ENCODE measurements at regions of chr10 and their contacts with region 1.

Region 1: GRCh38 chr10:99234041-99234790 is 1.4 kb downstream of the HPSE2 start:
- DNase-seq: peak; percentile 25
- H3K4me3 Mint-ChIP-seq: peak overlapping the region; percentile 39
- H3K27ac Mint-ChIP-seq: no peak overlapping the region
- H3K4me1 Mint-ChIP-seq: no peaks in the 10 kb centered on the region
- H3K27me3 Mint-ChIP-seq: peaks cover 74% of the 10 kb centered on the region

Region 2: DNA sequence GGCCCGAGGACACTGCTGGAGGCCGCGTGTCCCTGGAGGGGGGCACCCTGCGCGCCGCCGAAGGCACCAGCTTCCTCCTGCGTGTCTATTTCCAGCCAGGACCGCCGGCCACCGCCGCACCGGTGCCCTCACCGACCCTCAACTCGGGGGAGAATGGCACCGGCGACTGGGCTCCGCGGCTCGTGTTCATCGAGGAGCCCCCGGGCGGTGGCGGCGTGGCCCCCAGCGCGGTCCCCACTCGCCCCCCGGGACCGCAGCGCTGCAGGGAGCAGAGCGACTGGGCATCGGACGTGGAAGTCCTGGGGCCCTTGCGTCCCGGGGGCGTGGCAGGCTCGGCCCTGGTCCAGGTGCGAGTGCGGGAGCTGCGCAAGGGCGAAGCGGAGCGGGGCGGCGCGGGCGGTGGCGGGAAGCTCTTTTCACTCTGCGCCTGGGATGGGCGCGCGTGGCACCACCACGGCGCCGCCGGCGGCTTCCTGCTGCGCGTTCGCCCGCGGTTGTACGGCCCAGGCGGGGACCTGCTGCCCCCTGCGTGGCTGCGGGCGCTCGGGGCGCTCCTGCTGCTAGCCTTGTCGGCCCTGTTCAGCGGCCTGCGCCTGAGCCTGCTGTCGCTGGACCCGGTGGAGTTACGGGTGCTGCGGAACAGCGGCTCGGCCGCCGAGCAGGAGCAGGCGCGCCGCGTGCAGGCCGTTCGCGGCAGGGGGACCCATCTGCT is 95.5 kb after region 1 on chr10:
- intact Hi-C with region 1: loop called (anchors 5 kb)
- DNase-seq: no peak
- H3K4me3 Mint-ChIP-seq: no peak overlapping the region
- H3K27ac Mint-ChIP-seq: no peak overlapping the region
- H3K4me1 Mint-ChIP-seq: no peaks in the 10 kb centered on the region
- H3K27me3 Mint-ChIP-seq: peaks cover 34% of the 10 kb centered on the region

Region 3: GRCh38 chr10:99532687-99533495 is 298.7 kb after region 1 on chr10 and contains the start of gene NKX2-3:
- intact Hi-C with region 1: loop called (anchors 5 kb)
- DNase-seq: peak; percentile 6
- H3K4me3 Mint-ChIP-seq: peak within 1 kb of the TSS; percentile 22
- H3K27ac Mint-ChIP-seq: peak within 1 kb of the TSS; percentile 73
- H3K4me1 Mint-ChIP-seq: peaks cover 47% of the 10 kb centered on the region
- H3K27me3 Mint-ChIP-seq: peaks cover 87% of the 10 kb centered on the region
- total RNA-seq, gene NKX2-3: not detected in 2 replicates

Region 4: DNA sequence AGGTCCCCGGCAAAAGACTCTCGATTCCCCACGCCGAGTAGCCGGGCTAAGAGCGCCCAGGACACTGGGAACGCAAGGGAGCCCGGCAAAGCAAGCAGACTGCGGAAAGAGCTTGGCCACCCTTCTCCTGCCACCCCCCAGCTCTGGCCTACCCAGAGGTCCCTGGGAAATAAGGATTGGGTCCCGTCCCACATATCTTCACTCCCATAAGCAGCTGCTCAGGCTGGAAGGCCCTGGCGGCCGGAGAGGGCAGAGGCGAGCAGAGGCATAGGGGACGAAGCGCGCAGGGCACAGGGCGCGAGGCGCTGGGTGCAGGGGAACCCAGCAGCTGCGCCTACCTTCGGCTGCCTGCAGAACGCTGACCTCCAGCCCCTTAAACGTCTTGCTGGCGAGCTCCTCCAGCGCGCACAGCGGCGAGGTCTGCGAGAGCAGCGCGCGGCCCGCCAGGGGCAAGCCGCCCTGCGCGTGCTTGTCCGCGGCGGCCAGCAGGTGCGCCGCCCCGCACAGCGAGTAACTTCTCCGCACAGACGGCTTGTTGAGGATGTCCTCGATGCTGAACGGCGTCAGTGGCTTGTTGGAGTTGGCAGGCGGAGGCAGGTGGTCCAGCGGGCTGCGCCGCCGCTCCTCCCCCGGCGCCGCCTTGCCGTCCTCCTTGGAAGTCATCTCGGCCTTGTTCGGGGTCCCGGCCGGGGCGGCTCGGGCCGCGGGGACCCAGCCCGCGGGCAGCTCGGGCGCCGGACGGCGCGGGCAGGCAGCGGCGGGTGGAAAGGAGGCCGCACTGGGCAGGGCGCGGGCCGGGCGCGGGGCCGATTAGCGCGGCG is 1994.1 kb after region 1 on chr10:
- intact Hi-C with region 1: loop called (anchors 10 kb)
- DNase-seq: no peak
- H3K4me3 Mint-ChIP-seq: no peak overlapping the region
- H3K27ac Mint-ChIP-seq: peak overlapping the region; percentile 71
- H3K4me1 Mint-ChIP-seq: peaks cover 17% of the 10 kb centered on the region
- H3K27me3 Mint-ChIP-seq: peaks cover 76% of the 10 kb centered on the region